ENCODE measurements at regions of chr1 and their contacts with region 1.

Region 1: DNA sequence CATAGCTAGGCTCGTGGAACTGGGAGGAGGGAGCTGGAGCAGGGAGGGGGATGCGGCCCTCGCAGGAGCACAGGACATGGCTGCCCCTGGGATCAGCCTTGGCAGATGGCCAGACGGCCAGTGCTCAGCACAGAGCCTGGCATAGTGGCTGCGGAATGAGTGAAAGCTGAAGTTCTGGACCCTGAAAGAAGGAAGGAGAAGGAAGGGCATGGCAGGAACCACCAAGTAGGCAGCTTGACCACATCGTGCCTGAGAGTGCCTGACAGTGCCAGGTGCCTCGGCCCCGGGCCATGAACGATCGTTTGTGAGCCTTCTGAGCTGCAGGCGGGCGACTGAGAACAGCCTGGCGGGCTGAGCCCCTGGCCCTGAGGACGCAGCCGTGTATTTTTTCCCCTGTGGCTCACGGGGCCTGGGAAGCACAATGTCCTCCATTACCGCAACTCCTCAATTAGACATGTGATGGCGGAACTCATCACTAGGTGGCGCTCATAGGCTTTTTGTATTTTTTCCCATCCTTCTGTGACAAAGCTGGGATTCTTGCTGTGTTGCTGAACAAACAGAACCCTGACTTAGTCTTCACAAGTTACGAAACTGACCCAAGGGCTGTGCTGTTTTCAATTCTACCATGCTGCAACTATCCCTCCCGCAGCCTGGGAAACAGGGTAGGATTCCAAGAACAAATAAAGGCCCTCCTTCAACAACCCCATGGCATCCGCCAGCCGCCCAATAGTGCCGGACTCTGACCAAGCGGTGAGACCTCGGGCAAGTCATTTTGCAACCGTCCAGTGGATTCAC is 29.9 kb upstream of the TMEM61 start:
- DNase-seq: peak; percentile 61 to 75 (median 63)
- H3K4me3 ChIP-seq: peak overlapping the region in 1 of 7 experiments; percentile 58
- H3K27ac ChIP-seq: no peak overlapping the region
- H3K4me1 ChIP-seq: peaks cover 3 to 6% (median 4%) of the 10 kb centered on the region in 4 experiments
- H3K27me3 ChIP-seq: no peaks in the 10 kb centered on the region

Region 2: GRCh38 chr1:54965624-54966340 is 15.2 kb after region 1 on chr1:
- CTCF ChIA-PET with region 1: interaction called, 21 read pairs
- POLR2A ChIA-PET with region 1: no interaction called
- DNase-seq: peak; percentile 54 to 86 (median 85)
- H3K4me3 ChIP-seq: peak overlapping the region in 1 of 7 experiments; percentile 48
- H3K27ac ChIP-seq: no peak overlapping the region
- H3K4me1 ChIP-seq: peaks cover 3 to 18% (median 12%) of the 10 kb centered on the region in 4 experiments
- H3K27me3 ChIP-seq: no peaks in the 10 kb centered on the region

Region 3: DNA sequence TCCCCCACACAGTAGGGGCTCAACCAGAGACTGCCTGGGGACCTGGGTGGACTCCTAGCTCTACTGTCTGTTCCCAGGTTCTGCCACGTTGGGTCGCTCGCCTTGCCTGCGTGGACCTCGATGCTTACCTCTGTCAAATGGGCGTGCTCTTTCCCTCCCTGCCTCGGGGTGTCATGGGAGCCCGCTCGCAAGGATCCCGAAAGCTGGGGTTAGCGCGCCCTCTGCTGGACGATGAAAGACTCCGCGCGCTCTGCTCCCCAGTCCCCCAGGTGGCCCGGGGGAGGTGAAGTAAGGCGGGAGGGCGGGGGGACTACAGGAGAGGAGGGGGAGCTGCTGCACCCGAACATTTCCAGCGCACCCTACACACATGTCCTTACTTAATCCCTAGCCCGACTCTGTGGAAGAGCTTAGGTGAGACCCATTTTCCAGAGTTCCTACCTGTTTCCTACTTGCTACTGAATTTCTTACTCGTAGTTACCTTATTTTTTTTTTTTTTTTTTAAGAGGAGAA is 45.8 kb after region 1 on chr1:
- CTCF ChIA-PET with region 1: interaction called, 235 read pairs
- POLR2A ChIA-PET with region 1: no interaction called
- DNase-seq: peak; percentile 68 to 81 (median 80)
- H3K4me3 ChIP-seq: peak overlapping the region in 4 of 7 experiments; percentile 14 to 63 (median 57)
- H3K27ac ChIP-seq: no peak overlapping the region
- H3K4me1 ChIP-seq: peaks cover 0 to 10% (median 8%) of the 10 kb centered on the region in 4 experiments
- H3K27me3 ChIP-seq: peaks cover 0 to 62% (median 20%) of the 10 kb centered on the region in 5 experiments

Region 4: DNA sequence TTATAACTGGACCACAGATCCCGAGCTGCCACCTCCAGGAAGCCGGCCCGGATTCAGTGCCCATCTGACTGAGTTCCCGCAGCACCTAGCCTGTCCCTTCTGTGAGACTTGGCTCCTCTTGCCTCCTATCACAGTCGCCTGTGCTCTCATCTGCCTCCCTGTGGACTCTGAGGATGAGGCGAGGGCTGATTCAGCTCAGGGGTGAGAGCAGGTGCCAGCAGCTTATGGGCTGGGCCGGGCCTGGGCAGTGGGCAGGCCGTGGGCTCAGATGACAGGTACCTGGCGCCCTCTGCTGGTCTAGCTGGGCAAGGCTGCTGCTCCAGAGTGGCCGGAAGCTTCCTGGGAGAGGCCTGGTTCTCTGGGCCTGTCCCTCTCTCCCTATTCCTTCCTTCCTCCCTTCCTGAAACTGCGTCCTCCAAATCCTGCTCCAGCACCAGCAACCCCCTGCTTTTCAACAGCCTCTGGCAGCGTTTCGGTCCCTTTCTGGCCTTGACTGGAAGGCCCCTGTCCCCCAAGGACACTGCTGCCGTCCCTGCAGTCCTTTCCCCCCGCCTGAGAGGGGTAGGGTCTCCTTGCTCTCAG is 71.5 kb after region 1 on chr1:
- CTCF ChIA-PET with region 1: interaction called, 30 read pairs
- POLR2A ChIA-PET with region 1: no interaction called
- DNase-seq: peak; percentile 80 to 84 (median 81)
- H3K4me3 ChIP-seq: no peak overlapping the region
- H3K27ac ChIP-seq: no peak overlapping the region
- H3K4me1 ChIP-seq: no peaks in the 10 kb centered on the region
- H3K27me3 ChIP-seq: peaks cover 0 to 4% (median 0%) of the 10 kb centered on the region in 5 experiments